PC-9 (cell line): ENCODE measurements at regions of chr6 and their contacts with region 1.

Region 1: GRCh38 chr6:32047850-32048766 is 9.9 kb downstream of the CYP21A2 start:
- DNase-seq: peak; percentile 38 to 74
- H3K4me3 ChIP-seq: peak overlapping the region; percentile 46; the same call in 1 of the 2 replicates
- H3K27ac ChIP-seq: peak overlapping the region; percentile 91
- H3K4me1 ChIP-seq: peaks cover 30% of the 10 kb centered on the region
- H3K27me3 ChIP-seq: no peaks in the 10 kb centered on the region
- CTCF ChIP-seq: peak; percentile 81

Region 2: DNA sequence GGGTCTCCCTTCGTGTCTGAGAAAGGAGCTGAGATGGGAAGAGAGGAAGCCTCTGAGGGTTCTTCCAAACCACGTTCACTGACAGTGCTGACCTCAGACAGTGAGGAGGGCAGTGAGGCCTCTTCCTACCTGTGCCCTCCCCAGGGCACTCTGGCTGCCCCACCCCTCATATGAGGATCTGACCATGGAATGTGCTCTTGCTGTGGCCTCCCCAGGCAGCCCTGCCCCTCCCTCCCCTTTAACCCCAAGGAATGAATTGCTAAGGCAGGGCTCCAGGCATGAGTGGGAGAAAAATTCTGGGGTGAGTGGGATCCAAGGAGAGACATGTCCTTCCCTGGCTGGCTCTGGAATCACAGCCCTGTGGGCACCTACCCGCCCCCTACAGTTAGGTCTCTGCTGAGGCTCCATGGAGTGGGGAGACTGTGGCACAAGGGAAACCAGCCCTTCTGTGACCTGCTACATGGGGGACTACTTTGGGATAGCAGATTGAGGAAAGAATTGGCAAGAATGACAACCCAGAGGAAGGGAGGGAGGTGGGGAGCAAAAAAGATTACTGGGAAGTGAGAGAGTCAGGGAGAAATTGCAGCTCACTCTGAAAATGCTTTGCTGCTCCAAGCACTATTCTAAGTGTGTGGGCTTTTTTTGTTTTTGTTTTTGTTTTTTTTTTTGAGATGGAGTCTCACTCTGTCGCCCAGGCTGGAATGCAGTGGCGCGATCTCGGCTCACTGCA is 31.6 kb after region 1 on chr6:
- CTCF ChIA-PET with region 1: interaction called, 4 read pairs
- POLR2A ChIA-PET with region 1: interaction called, 4 read pairs
- intact Hi-C with region 1: loop called (anchors 2 kb)
- DNase-seq: peak; percentile 48 to 63
- H3K4me3 ChIP-seq: no peak overlapping the region
- H3K27ac ChIP-seq: peak overlapping the region; percentile 38; the same call in 1 of the 2 replicates
- H3K4me1 ChIP-seq: peaks cover 87% of the 10 kb centered on the region
- H3K27me3 ChIP-seq: no peaks in the 10 kb centered on the region
- CTCF ChIP-seq: no peak

Region 3: GRCh38 chr6:32092760-32093497 is 44.8 kb after region 1 on chr6:
- CTCF ChIA-PET with region 1: interaction called, 11 read pairs
- POLR2A ChIA-PET with region 1: no interaction called
- intact Hi-C with region 1: no loop called
- DNase-seq: no peak
- H3K4me3 ChIP-seq: no peak overlapping the region
- H3K27ac ChIP-seq: no peak overlapping the region
- H3K4me1 ChIP-seq: 0 out of 2 replicates have a peak, but pooled peaks cover 2% of the 10 kb centered on the region
- H3K27me3 ChIP-seq: no peaks in the 10 kb centered on the region
- CTCF ChIP-seq: no peak

Region 4: GRCh38 chr6:32113386-32114352 is 65.6 kb after region 1 on chr6:
- CTCF ChIA-PET with region 1: no interaction called
- POLR2A ChIA-PET with region 1: interaction called, 3 read pairs
- intact Hi-C with region 1: loop called (anchors 2 kb)
- DNase-seq: peak; percentile 64 to 85
- H3K4me3 ChIP-seq: no peak overlapping the region
- H3K27ac ChIP-seq: no peak overlapping the region
- H3K4me1 ChIP-seq: peaks cover 21% of the 10 kb centered on the region; the same call in 1 of the 2 replicates
- H3K27me3 ChIP-seq: no peaks in the 10 kb centered on the region
- CTCF ChIP-seq: peak; percentile 45; the same call in 1 of the 2 replicates

Region 5: GRCh38 chr6:32271429-32271828 is 223.3 kb after region 1 on chr6:
- CTCF ChIA-PET with region 1: no interaction called
- POLR2A ChIA-PET with region 1: no interaction called
- intact Hi-C with region 1: no loop called
- DNase-seq: no peak
- H3K4me3 ChIP-seq: no peak overlapping the region
- H3K27ac ChIP-seq: no peak overlapping the region
- H3K4me1 ChIP-seq: no peaks in the 10 kb centered on the region
- H3K27me3 ChIP-seq: peaks cover 27% of the 10 kb centered on the region; the same call in 1 of the 2 replicates
- CTCF ChIP-seq: no peak